ENCODE measurements at regions of chr18 and their contacts with region 1.

Region 1: GRCh38 chr18:7164323-7165004 is 46.9 kb upstream of the LAMA1 start:
- DNase-seq: no peak
- ATAC-seq: no peak
- H3K4me3 ChIP-seq: no peak overlapping the region
- H3K27ac ChIP-seq: no peak overlapping the region
- H3K4me1 ChIP-seq: no peaks in the 10 kb centered on the region
- H3K27me3 ChIP-seq: no peaks in the 10 kb centered on the region
- CTCF ChIP-seq: peak; percentile 44

Region 2: GRCh38 chr18:7038330-7038851 is 126.1 kb before region 1 on chr18:
- intact Hi-C with region 1: loop called in 1 of 2 experiments (anchors 10 kb)
- DNase-seq: peak; percentile 84 to 85
- ATAC-seq: peak; percentile 83 to 93 (median 91)
- H3K4me3 ChIP-seq: peak overlapping the region; percentile 18
- H3K27ac ChIP-seq: no peak overlapping the region
- H3K4me1 ChIP-seq: no peaks in the 10 kb centered on the region
- H3K27me3 ChIP-seq: peaks cover 0 to 2% (median 0%) of the 10 kb centered on the region in 3 donors
- CTCF ChIP-seq: peak; percentile 30

Region 3: GRCh38 chr18:7133181-7133580 is 31.3 kb before region 1 on chr18:
- intact Hi-C with region 1: no loop called
- DNase-seq: no peak
- ATAC-seq: no peak
- H3K4me3 ChIP-seq: no peak overlapping the region
- H3K27ac ChIP-seq: no peak overlapping the region
- H3K4me1 ChIP-seq: no peaks in the 10 kb centered on the region
- H3K27me3 ChIP-seq: peaks cover 0 to 5% (median 0%) of the 10 kb centered on the region in 3 donors
- CTCF ChIP-seq: no peak

Measured in psoas muscle (tissue), 8 donors.